ENCODE measurements at regions of chr3 and their contacts with region 1.

Region 1: DNA sequence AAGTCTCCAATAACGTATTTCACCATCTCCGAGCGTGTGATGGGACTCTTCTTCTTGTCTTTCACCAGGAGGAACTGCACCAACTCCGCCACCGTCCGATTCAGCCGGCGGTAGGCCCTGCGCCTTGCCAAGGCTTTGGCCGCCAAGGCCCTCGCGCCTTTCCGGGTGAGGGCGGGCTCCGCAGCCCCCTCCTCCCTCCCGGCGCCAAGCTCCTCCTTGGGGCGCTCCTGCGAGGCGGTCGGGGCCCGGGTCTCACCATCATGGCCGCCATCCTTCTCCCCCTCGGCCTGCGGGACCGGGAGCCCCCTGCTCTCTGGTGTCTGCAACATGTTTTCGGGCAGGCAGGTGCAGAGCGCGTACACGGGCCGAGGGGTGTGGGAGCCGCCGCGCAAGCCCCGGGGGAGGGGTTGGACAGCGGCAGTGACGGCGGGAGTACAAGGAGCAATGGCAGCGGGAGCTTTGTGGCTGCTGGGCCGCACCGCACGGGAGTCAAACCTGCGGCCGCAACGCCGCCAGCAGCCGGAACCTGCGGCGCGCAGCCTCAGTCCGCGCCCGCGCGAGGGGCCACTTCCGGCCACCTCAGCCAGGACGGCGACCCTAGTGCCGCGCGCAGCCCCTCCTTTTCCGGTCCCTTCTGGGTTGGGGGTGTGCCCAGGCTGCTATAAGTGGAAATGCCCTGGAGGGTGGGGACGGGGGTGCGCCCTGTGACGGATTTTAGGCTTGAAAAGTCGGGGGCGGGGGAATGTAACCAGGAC is at the start of gene MAGEF1:
- DNase-seq: peak; percentile 94
- total RNA-seq, gene MAGEF1: 29.6 to 31.3 TPM

Region 2: DNA sequence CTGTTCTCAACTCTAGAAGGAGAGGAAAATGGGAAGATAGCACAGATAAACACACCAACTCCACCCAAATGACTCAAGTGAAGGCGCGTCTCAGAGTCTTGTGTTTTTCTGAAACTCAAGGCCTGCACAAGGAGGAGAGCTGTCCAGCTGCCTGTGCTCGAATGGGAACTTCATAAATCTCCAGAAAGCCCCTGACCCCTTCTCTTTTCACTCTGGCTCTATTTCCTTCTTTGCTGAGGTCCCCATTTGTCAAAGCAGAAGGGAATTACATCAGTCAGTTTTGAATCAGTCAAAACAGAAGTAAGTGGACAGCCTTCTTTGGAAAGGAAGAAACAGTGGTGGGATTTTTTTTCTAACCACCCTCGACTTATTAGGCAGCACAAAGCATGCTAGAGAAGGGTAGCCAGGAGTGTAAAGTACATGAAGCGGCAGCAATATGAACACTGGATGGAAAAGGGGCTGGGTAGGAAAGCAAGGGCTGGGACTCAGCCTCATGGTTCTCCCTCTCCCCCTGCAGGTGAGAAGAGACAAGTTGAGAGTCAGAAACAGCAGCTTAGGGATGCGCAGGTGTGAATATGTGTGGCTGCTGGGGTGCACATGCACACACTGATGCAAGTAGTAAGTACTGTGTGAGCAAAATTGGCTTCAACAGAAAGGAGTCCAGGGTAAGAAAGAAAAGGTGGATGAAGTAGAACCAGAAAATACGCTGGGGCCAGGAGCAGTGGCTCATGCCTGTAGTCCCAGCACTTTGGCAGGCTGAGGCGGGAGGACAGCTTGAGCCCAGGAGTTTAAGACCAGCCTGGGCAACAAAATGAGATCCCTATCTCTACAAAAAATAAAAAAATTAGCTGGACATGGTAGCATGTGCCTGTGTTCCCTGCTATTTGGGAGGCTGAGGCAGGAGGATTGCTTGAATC is 36.8 kb after region 1 on chr3:
- intact Hi-C with region 1: no loop called
- DNase-seq: peak; percentile 66

Region 3: GRCh38 chr3:184764191-184764590 is 52.5 kb after region 1 on chr3:
- intact Hi-C with region 1: no loop called
- DNase-seq: peak; percentile 1

Region 4: GRCh38 chr3:184777336-184778004 is 65.8 kb after region 1 on chr3:
- intact Hi-C with region 1: loop called in 1 of 2 experiments (anchors 10 kb)
- DNase-seq: peak; percentile 94